WTC11 (cell line): ENCODE measurements at regions of chr1 and their contacts with region 1.

Region 1: DNA sequence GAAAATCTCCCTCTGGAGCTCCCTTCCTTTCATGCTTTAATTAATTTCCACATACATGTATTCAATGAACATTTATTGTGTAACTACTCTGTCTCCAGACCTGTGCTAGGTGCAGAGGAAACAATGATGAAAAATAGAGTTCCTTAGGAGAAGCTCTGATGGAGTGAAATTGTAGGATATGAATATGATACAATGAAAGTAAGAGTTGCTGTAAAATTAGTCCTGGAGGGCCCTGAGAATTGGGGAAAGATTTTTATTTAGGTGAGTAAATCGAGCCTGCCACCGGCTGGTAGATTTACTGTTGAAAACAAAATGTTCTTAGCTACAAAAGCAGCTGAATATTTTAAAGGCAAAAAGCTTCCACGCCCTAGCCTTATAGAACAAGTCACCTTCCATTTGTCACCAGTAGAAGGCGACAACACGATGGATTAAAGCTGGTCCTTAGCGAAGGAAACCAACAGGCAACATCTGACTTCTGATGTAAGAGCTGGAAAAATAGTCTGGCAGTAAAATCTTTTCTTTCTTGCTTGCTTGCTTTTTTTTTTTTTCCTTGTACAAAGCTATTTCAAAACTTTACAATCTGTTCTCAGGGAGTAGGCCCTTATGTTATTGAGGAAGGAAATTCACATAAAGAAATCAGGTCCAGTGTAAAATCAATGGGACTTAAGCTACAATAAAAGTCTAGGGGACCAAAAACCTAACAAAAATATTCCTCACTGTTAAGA is 82.0 kb upstream of the ROR1 start:
- DNase-seq: peak; percentile 41
- ATAC-seq: peak; percentile 93
- H3K4me3 Mint-ChIP-seq: no peak overlapping the region
- H3K27ac Mint-ChIP-seq: no peak overlapping the region
- H3K4me1 Mint-ChIP-seq: peaks cover 7% of the 10 kb centered on the region; the same call in 1 of the 2 replicates
- H3K27me3 Mint-ChIP-seq: no peaks in the 10 kb centered on the region
- CTCF ChIP-seq: 0 out of 2 replicates have a peak, but pooled peaks have one; percentile 47

Region 2: DNA sequence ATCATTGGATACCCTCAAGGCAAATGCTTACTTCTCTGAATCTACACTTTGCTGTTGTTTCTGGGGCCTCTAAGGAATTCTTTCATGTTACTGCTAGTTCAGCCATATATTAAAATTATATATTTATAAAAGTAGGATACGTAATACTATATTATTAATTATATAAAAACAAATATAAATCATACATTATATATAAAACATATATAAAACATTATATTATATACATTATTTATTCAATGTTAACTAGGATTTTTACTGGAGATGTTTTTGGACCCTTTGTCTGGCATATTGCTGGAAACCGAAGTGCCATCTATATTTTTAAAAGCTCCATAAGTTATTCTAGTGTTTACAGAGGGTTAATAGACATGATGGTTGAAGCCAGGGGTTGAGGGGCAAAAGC is 312.3 kb before region 1 on chr1:
- CTCF ChIA-PET with region 1: no interaction called
- POLR2A ChIA-PET with region 1: no interaction called
- DNase-seq: no peak
- ATAC-seq: no peak
- H3K4me3 Mint-ChIP-seq: no peak overlapping the region
- H3K27ac Mint-ChIP-seq: no peak overlapping the region
- H3K4me1 Mint-ChIP-seq: peaks cover 19% of the 10 kb centered on the region
- H3K27me3 Mint-ChIP-seq: no peaks in the 10 kb centered on the region
- CTCF ChIP-seq: no peak

Region 3: GRCh38 chr1:63615768-63616420 is 76.0 kb before region 1 on chr1:
- CTCF ChIA-PET with region 1: interaction called, 15 read pairs
- POLR2A ChIA-PET with region 1: no interaction called
- DNase-seq: peak; percentile 58
- ATAC-seq: peak; percentile 68
- H3K4me3 Mint-ChIP-seq: no peak overlapping the region
- H3K27ac Mint-ChIP-seq: no peak overlapping the region
- H3K4me1 Mint-ChIP-seq: peaks cover 39% of the 10 kb centered on the region
- H3K27me3 Mint-ChIP-seq: no peaks in the 10 kb centered on the region
- CTCF ChIP-seq: peak; percentile 69

Region 4: GRCh38 chr1:63704443-63704842 is 12.6 kb after region 1 on chr1:
- CTCF ChIA-PET with region 1: interaction called, 23 read pairs
- POLR2A ChIA-PET with region 1: no interaction called
- DNase-seq: no peak
- ATAC-seq: no peak
- H3K4me3 Mint-ChIP-seq: no peak overlapping the region
- H3K27ac Mint-ChIP-seq: no peak overlapping the region
- H3K4me1 Mint-ChIP-seq: peaks cover 19% of the 10 kb centered on the region
- H3K27me3 Mint-ChIP-seq: peaks cover 3% of the 10 kb centered on the region; the same call in 1 of the 2 replicates
- CTCF ChIP-seq: no peak

Region 5: DNA sequence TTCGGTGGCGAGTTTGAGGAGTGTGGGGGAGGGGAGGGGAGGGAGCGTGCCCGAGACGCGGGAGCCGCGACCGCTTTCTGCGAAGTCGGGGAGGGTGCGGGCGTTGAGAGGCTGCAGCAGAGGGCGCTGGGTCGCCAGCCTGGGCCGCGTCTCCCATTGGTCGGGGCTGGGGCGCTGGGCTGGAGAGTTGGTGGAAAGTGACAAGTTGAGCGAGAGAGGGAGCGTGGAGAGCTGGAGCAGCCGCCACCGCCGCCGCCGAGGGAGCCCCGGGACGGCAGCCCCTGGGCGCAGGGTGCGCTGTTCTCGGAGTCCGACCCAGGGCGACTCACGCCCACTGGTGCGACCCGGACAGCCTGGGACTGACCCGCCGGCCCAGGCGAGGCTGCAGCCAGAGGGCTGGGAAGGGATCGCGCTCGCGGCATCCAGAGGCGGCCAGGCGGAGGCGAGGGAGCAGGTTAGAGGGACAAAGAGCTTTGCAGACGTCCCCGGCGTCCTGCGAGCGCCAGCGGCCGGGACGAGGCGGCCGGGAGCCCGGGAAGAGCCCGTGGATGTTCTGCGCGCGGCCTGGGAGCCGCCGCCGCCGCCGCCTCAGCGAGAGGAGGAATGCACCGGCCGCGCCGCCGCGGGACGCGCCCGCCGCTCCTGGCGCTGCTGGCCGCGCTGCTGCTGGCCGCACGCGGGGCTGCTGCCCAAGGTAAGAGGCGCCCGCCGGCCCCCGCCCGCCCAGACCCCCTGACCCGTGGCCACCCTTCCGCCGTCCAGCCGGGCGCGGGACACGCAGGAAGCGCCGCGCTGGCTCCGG is 82.2 kb after region 1 on chr1 and contains the start of gene ROR1:
- CTCF ChIA-PET with region 1: interaction called, 28 read pairs
- POLR2A ChIA-PET with region 1: no interaction called
- DNase-seq: peak; percentile 95
- ATAC-seq: peak; percentile 83
- H3K4me3 Mint-ChIP-seq: peak within 1 kb of the TSS; percentile 95
- H3K27ac Mint-ChIP-seq: peak within 1 kb of the TSS; percentile 99
- H3K4me1 Mint-ChIP-seq: peaks cover 58% of the 10 kb centered on the region
- H3K27me3 Mint-ChIP-seq: no peaks in the 10 kb centered on the region
- CTCF ChIP-seq: no peak
- total RNA-seq, gene ROR1: 54.6 to 56.3 TPM (median 55.2 TPM) in 3 replicates

Region 6: DNA sequence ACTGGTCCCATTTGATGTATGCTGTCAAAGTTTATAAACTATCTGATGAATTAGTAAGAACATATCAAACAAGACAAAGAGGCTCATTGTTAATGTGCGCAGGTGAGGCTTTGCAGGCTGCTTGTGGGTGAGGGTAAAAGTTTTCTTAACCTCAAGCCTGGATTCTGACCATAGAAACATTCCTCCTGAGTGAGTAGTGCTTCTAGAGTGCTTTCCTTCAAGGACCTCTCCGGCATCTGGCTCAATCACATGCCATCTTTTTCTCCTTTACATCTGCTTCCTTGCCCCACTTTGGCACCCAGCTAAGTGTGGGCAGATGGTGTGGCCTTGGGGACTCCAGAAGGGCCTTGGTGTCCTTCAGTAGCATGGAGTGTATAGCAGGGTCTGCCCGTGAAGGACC is 186.0 kb after region 1 on chr1:
- CTCF ChIA-PET with region 1: interaction called, 6 read pairs
- POLR2A ChIA-PET with region 1: interaction called, 12 read pairs
- DNase-seq: no peak
- ATAC-seq: no peak
- H3K4me3 Mint-ChIP-seq: no peak overlapping the region
- H3K27ac Mint-ChIP-seq: 0 out of 2 replicates have a peak overlapping the region, but pooled peaks have one; percentile 14
- H3K4me1 Mint-ChIP-seq: peaks cover 78% of the 10 kb centered on the region
- H3K27me3 Mint-ChIP-seq: no peaks in the 10 kb centered on the region
- CTCF ChIP-seq: no peak

Region 7: DNA sequence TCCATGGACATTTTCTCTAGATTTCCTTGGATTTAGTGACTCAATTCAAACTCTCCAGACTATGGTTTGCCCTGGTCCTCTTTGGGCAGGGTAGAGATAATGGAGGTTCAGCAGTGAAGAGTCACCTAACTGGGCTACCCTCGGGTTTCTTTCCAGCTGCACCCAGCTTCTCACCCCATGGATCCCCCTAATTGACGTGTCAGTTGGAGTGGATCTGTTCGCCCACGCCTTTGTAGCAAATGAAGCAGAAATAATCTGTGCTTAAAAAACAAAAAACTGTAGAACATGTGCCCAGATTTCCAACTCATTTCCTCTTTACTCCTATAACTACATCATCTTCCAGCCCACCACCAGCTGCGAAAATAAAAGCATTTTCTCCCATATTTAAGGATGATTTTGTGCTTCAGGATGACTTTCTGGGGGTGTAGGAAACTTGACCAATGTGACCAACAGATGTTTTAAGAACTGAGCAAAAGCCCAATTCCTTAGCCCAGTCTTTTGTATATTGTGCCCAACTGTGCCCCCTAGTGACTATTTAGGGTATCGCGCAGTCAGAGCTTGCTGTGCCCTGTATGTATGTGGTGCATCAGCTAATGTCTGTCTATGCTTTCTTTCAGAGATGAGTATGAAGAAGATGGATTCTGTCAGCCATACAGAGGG is 445.0 kb after region 1 on chr1:
- CTCF ChIA-PET with region 1: interaction called, 34 read pairs
- POLR2A ChIA-PET with region 1: no interaction called
- DNase-seq: peak; percentile 84
- ATAC-seq: peak; percentile 92
- H3K4me3 Mint-ChIP-seq: no peak overlapping the region
- H3K27ac Mint-ChIP-seq: no peak overlapping the region
- H3K4me1 Mint-ChIP-seq: peaks cover 7% of the 10 kb centered on the region
- H3K27me3 Mint-ChIP-seq: no peaks in the 10 kb centered on the region
- CTCF ChIP-seq: peak; percentile 90